Naive thymus-derived CD4-positive, alpha-beta T cell (primary cell): ENCODE measurements at regions of chr7 and their contacts with region 1.

Region 1: GRCh38 chr7:84139986-84140729 is 54.4 kb downstream of the SEMA3A start:
- DNase-seq: no peak
- ATAC-seq: no peak
- H3K4me3 ChIP-seq: no peak overlapping the region
- H3K4me3 Mint-ChIP-seq: no peak overlapping the region
- H3K27ac ChIP-seq: no peak overlapping the region
- H3K27ac Mint-ChIP-seq: no peak overlapping the region
- H3K4me1 ChIP-seq: no peaks in the 10 kb centered on the region
- H3K4me1 Mint-ChIP-seq: peaks cover 0 to 27% (median 5%) of the 10 kb centered on the region in 7 donors
- H3K27me3 ChIP-seq: no peaks in the 10 kb centered on the region
- H3K27me3 Mint-ChIP-seq: no peaks in the 10 kb centered on the region

Region 2: GRCh38 chr7:84013710-84014171 is 126.4 kb before region 1 on chr7:
- CTCF ChIA-PET with region 1: no interaction called
- POLR2A ChIA-PET with region 1: no interaction called
- intact Hi-C with region 1: loop called in 1 of 2 experiments (anchors 5 kb)
- DNase-seq: no peak
- ATAC-seq: no peak
- H3K4me3 ChIP-seq: no peak overlapping the region
- H3K4me3 Mint-ChIP-seq: no peak overlapping the region
- H3K27ac ChIP-seq: no peak overlapping the region
- H3K27ac Mint-ChIP-seq: peak overlapping the region in 1 of 9 donors; percentile 28
- H3K4me1 ChIP-seq: no peaks in the 10 kb centered on the region
- H3K4me1 Mint-ChIP-seq: no peaks in the 10 kb centered on the region
- H3K27me3 ChIP-seq: no peaks in the 10 kb centered on the region
- H3K27me3 Mint-ChIP-seq: peaks cover 0 to 2% (median 0%) of the 10 kb centered on the region in 5 donors

Region 3: DNA sequence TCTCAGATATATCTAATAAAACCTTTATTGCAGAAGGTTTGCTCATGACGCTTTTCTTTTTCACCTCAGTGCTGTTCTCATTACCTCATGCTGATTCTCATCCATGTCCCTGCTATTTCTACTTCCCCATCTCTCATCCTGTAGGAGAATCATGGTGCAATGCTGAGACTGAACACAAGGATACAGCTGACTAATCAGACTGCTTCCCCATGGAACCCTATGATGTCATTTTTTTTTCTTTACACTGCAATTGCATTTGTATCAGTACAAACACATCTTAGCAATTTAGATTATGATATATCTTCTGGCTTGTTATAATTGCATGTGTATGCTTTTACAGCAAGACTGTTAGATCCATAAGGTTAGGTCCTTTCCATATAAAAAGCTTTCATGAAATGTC is 39.3 kb before region 1 on chr7:
- CTCF ChIA-PET with region 1: no interaction called
- POLR2A ChIA-PET with region 1: no interaction called
- intact Hi-C with region 1: loop called in 1 of 2 experiments (anchors 5 kb)
- DNase-seq: no peak
- ATAC-seq: no peak
- H3K4me3 ChIP-seq: no peak overlapping the region
- H3K4me3 Mint-ChIP-seq: no peak overlapping the region
- H3K27ac ChIP-seq: no peak overlapping the region
- H3K27ac Mint-ChIP-seq: no peak overlapping the region
- H3K4me1 ChIP-seq: no peaks in the 10 kb centered on the region
- H3K4me1 Mint-ChIP-seq: peaks cover 0 to 27% (median 7%) of the 10 kb centered on the region in 7 donors
- H3K27me3 ChIP-seq: no peaks in the 10 kb centered on the region
- H3K27me3 Mint-ChIP-seq: no peaks in the 10 kb centered on the region

Region 4: DNA sequence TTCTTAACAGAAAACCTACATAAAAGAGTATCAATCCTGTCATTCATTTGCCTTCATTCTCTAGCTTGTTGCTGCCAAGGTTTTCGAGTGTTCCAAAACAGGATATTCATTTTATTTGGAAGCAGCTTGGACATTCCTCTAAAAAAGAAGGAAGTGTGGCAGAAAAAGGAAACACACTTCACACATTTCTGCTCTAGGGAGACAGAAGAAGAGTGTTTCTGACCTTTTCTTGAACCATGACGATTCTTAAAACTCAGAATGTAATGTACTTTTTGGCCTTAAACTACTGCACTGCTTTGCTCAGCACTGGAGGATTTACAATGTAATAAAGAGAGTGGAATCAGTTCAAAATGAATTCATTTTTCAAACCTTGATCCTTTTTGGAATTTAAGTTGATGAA is 26.9 kb before region 1 on chr7:
- CTCF ChIA-PET with region 1: no interaction called
- POLR2A ChIA-PET with region 1: no interaction called
- intact Hi-C with region 1: no loop called
- DNase-seq: no peak
- ATAC-seq: no peak
- H3K4me3 ChIP-seq: no peak overlapping the region
- H3K4me3 Mint-ChIP-seq: no peak overlapping the region
- H3K27ac ChIP-seq: no peak overlapping the region
- H3K27ac Mint-ChIP-seq: peak overlapping the region in 1 of 9 donors; percentile 7
- H3K4me1 ChIP-seq: no peaks in the 10 kb centered on the region
- H3K4me1 Mint-ChIP-seq: peaks cover 0 to 5% (median 0%) of the 10 kb centered on the region in 7 donors
- H3K27me3 ChIP-seq: no peaks in the 10 kb centered on the region
- H3K27me3 Mint-ChIP-seq: peaks cover 0 to 10% (median 0%) of the 10 kb centered on the region in 5 donors

Region 5: DNA sequence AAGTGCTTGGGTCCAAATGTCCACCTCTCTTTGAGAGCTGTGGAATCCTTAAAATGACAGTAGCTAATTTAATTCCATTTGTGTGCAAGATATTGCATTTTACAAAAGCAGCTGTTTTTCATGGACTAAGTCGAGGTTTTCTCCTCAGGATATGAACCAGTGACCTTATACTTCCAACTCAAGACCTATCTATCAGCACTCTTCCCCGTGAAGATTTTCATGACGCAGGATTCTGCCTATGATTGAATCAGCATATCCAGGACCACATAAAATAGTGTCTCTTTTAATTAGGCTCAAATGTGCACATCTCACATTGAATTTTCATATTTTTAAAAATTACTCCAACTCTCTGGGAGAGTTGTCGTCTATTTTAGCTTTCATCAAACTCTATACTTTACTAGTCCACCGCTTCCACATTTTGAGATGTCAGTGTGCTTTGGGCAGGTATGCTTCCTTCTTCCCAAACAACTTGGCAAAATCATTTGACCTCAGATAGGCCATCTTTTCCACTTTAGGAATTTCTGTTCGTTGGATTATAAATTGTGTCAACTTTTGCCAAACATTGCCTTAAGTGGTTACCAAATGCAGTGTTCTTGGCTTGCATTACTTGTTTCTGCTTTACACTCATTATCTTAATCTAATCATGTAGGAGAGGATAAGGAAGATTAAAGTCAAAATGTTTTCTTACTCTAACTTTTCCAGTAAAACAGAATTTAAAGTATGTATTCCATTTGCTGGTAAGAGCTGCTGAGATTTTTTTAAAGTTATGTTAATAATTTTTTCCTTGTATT is 15.0 kb after region 1 on chr7:
- CTCF ChIA-PET with region 1: interaction called, 5 read pairs
- POLR2A ChIA-PET with region 1: no interaction called
- intact Hi-C with region 1: loop called in 1 of 2 experiments (anchors 2 kb)
- DNase-seq: no peak
- ATAC-seq: no peak
- H3K4me3 ChIP-seq: no peak overlapping the region
- H3K4me3 Mint-ChIP-seq: no peak overlapping the region
- H3K27ac ChIP-seq: no peak overlapping the region
- H3K27ac Mint-ChIP-seq: no peak overlapping the region
- H3K4me1 ChIP-seq: no peaks in the 10 kb centered on the region
- H3K4me1 Mint-ChIP-seq: peaks cover 0 to 4% (median 0%) of the 10 kb centered on the region in 7 donors
- H3K27me3 ChIP-seq: no peaks in the 10 kb centered on the region
- H3K27me3 Mint-ChIP-seq: no peaks in the 10 kb centered on the region